ENCODE measurements at regions of chr9 and their contacts with region 1.

Region 1: DNA sequence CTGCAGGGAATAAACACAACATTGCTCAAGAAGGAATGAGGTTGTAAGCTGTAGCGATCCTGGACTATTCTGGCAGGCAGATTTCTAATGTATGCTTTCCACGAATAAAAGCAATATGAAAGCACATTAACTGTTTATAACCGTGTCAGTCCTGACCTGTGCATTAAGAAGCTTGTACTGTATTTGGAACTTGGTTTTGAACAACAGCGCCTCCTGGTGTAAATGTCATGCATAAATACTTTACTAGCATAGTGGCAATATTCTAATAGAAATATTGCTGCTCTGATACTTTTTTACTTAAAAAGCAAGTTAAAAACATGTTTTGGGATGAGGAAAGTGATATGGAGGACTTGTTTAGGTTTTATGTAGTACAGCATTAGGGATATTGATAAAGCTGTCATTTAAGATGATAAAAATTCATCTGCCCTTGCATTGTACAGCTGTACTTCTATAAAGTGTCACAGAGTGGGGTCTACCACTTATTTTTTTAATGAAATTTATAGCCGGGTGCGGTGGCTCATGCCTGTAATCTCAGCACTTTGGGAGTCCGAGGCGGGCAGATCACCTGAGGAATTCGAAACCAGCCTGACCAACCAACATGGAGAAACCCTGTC is 70.7 kb upstream of the GNE start:
- DNase-seq: peak; percentile 58
- ATAC-seq: peak; percentile 81
- H3K4me3 Mint-ChIP-seq: no peak overlapping the region
- H3K27ac Mint-ChIP-seq: no peak overlapping the region
- H3K4me1 Mint-ChIP-seq: no peaks in the 10 kb centered on the region
- H3K27me3 Mint-ChIP-seq: no peaks in the 10 kb centered on the region

Region 2: GRCh38 chr9:36250079-36250478 is 78.8 kb before region 1 on chr9:
- CTCF ChIA-PET with region 1: interaction called, 35 read pairs
- POLR2A ChIA-PET with region 1: no interaction called
- intact Hi-C with region 1: loop called (anchors 1 kb)
- DNase-seq: no peak
- ATAC-seq: no peak
- H3K4me3 Mint-ChIP-seq: no peak overlapping the region
- H3K27ac Mint-ChIP-seq: no peak overlapping the region
- H3K4me1 Mint-ChIP-seq: peaks cover 22% of the 10 kb centered on the region
- H3K27me3 Mint-ChIP-seq: no peaks in the 10 kb centered on the region

Region 3: GRCh38 chr9:36306471-36307306 is 22.2 kb before region 1 on chr9:
- CTCF ChIA-PET with region 1: interaction called, 11 read pairs
- POLR2A ChIA-PET with region 1: no interaction called
- intact Hi-C with region 1: no loop called
- DNase-seq: peak; percentile 8
- ATAC-seq: peak; percentile 74
- H3K4me3 Mint-ChIP-seq: no peak overlapping the region
- H3K27ac Mint-ChIP-seq: peak overlapping the region; percentile 44
- H3K4me1 Mint-ChIP-seq: peaks cover 9% of the 10 kb centered on the region
- H3K27me3 Mint-ChIP-seq: no peaks in the 10 kb centered on the region

Region 4: DNA sequence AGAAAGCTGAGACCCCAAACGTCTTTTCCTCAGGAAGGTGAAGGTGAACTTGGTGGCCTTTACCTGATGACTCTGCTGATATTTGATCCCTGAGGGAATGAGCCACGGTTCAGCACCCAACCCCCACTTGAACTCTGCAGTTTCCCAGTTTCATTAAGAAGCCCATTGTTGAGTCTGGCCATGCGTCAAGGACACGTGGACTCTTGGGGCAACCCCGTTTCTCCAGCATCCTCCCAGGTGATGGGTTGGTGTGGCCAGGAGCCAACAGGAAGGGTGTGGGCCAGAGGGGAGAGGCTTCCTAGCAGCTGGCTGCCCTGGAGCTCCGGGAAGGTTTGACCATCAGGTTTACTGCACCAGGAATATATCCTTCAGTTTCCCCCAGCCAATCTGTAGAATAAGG is 11.1 kb before region 1 on chr9:
- CTCF ChIA-PET with region 1: interaction called, 15 read pairs
- POLR2A ChIA-PET with region 1: no interaction called
- intact Hi-C with region 1: no loop called
- DNase-seq: no peak
- ATAC-seq: no peak
- H3K4me3 Mint-ChIP-seq: no peak overlapping the region
- H3K27ac Mint-ChIP-seq: no peak overlapping the region
- H3K4me1 Mint-ChIP-seq: no peaks in the 10 kb centered on the region
- H3K27me3 Mint-ChIP-seq: no peaks in the 10 kb centered on the region